PC-3 (cell line): ENCODE measurements at regions of chr14 and their contacts with region 1.

Region 1: GRCh38 chr14:103391048-103391447 is 5.8 kb downstream of the MARK3 start:
- DNase-seq: peak; percentile 77
- ATAC-seq: peak; percentile 64
- H3K4me3 ChIP-seq: no peak overlapping the region
- H3K27ac ChIP-seq: no peak overlapping the region
- H3K4me1 ChIP-seq: peaks cover 41% of the 10 kb centered on the region
- H3K27me3 ChIP-seq: no peaks in the 10 kb centered on the region
- CTCF ChIP-seq: peak; percentile 90

Region 2: GRCh38 chr14:103292426-103293374 is 98.3 kb before region 1 on chr14:
- CTCF ChIA-PET with region 1: interaction called, 10 read pairs
- POLR2A ChIA-PET with region 1: no interaction called
- intact Hi-C with region 1: loop called (anchors 2 kb)
- DNase-seq: peak; percentile 84
- ATAC-seq: peak; percentile 80
- H3K4me3 ChIP-seq: no peak overlapping the region
- H3K27ac ChIP-seq: no peak overlapping the region
- H3K4me1 ChIP-seq: peaks cover 13% of the 10 kb centered on the region
- H3K27me3 ChIP-seq: no peaks in the 10 kb centered on the region
- CTCF ChIP-seq: peak; percentile 95

Region 3: GRCh38 chr14:103333754-103334643 is 57.0 kb before region 1 on chr14 and contains the start of gene EIF5:
- CTCF ChIA-PET with region 1: interaction called, 3 read pairs
- POLR2A ChIA-PET with region 1: interaction called, 3 read pairs
- intact Hi-C with region 1: loop called (anchors 2 kb)
- DNase-seq: peak; percentile 98
- ATAC-seq: peak; percentile 86
- H3K4me3 ChIP-seq: peak within 1 kb of the TSS; percentile 95
- H3K27ac ChIP-seq: peak within 1 kb of the TSS; percentile 81
- H3K4me1 ChIP-seq: peaks cover 25% of the 10 kb centered on the region
- H3K27me3 ChIP-seq: no peaks in the 10 kb centered on the region
- CTCF ChIP-seq: no peak
- total RNA-seq, gene EIF5: 198 and 216 TPM in 2 replicates

Region 4: GRCh38 chr14:103346286-103346685 is 44.8 kb before region 1 on chr14:
- CTCF ChIA-PET with region 1: interaction called, 8 read pairs
- POLR2A ChIA-PET with region 1: no interaction called
- intact Hi-C with region 1: loop called (anchors 2 kb)
- DNase-seq: no peak
- ATAC-seq: no peak
- H3K4me3 ChIP-seq: no peak overlapping the region
- H3K27ac ChIP-seq: no peak overlapping the region
- H3K4me1 ChIP-seq: no peaks in the 10 kb centered on the region
- H3K27me3 ChIP-seq: no peaks in the 10 kb centered on the region
- CTCF ChIP-seq: no peak

Region 5: DNA sequence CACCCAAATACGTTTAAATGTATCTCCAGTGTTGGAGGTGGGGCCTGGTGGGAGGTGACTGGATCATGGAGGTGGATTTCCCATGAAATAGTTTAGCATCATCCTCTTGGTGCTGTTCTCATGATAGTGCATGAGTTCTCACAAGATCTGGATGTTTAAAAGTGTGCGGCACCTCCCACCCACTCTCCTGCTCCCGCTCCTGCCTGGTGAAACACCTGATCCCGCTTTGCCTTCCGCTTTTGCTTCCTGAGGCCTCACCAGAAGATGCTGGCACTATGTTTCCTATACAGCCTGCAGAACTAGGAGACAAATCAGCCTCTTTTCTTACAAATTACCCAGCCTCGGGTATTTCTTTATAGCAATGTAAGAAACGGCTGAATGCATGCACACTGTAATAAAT is 36.9 kb before region 1 on chr14:
- CTCF ChIA-PET with region 1: interaction called, 11 read pairs
- POLR2A ChIA-PET with region 1: no interaction called
- intact Hi-C with region 1: no loop called
- DNase-seq: no peak
- ATAC-seq: no peak
- H3K4me3 ChIP-seq: no peak overlapping the region
- H3K27ac ChIP-seq: no peak overlapping the region
- H3K4me1 ChIP-seq: peaks cover 19% of the 10 kb centered on the region
- H3K27me3 ChIP-seq: no peaks in the 10 kb centered on the region
- CTCF ChIP-seq: no peak

Region 6: DNA sequence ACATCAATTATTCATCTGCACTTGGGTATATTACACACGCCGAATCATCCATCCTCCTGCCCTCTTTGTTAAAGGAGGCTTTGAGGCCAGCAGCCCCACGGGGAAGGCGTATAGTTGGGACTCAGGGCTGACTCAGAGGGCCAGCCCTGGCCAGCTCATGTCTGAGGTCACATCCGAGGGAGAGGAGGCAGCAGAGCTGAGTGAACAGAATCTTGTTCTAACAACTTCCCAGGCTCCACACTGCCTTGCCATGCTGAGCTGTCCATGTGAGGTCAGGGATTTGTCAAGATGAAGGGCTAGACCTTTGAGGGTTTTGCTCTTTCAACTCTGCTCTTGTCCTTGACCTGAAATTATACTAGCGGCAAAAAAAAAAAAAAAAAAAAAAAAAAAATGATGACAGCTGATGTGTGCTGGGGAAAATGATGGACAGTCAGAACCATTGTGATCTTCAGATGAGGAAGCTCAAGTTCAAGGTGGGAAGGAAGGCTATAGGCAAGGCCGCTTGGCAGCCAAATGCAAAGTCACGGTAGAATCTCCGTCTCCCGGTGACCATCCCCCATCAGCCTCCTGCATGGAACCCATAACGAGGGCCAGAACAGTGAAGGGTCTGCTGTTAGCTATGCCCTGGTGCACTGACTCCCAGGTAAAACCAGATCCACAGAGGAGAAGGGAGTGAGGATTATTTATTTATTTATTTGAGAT is 18.3 kb before region 1 on chr14:
- CTCF ChIA-PET with region 1: interaction called, 3 read pairs
- POLR2A ChIA-PET with region 1: interaction called, 37 read pairs
- intact Hi-C with region 1: no loop called
- DNase-seq: peak; percentile 97
- ATAC-seq: peak; percentile 100
- H3K4me3 ChIP-seq: no peak overlapping the region
- H3K27ac ChIP-seq: peak overlapping the region; percentile 93
- H3K4me1 ChIP-seq: peaks cover 20% of the 10 kb centered on the region
- H3K27me3 ChIP-seq: no peaks in the 10 kb centered on the region
- CTCF ChIP-seq: no peak